ENCODE measurements at regions of chr10 and their contacts with region 1.

Region 1: GRCh38 chr10:24249829-24250415 is 41.0 kb downstream of the KIAA1217 start:
- DNase-seq: no peak
- ATAC-seq: peak in 2 of 8 donors; percentile 19 to 25
- H3K4me3 ChIP-seq: no peak overlapping the region
- H3K27ac ChIP-seq: no peak overlapping the region
- H3K4me1 ChIP-seq: peaks cover 0 to 54% (median 22%) of the 10 kb centered on the region in 9 donors
- H3K27me3 ChIP-seq: no peaks in the 10 kb centered on the region
- CTCF ChIP-seq: no peak

Region 2: GRCh38 chr10:24215196-24215595 is 34.7 kb before region 1 on chr10:
- intact Hi-C with region 1: loop called in 1 of 10 experiments (anchors 5 kb)
- DNase-seq: peak in 1 of 2 donors; percentile 47
- ATAC-seq: peak; percentile 40 to 81 (median 76)
- H3K4me3 ChIP-seq: peak overlapping the region in 2 of 10 donors; percentile 20 to 25
- H3K27ac ChIP-seq: peak overlapping the region; percentile 39 to 84 (median 74)
- H3K4me1 ChIP-seq: peaks cover 12 to 85% (median 56%) of the 10 kb centered on the region in 9 donors
- H3K27me3 ChIP-seq: peaks cover 0 to 4% (median 0%) of the 10 kb centered on the region in 7 donors
- CTCF ChIP-seq: no peak

Region 3: DNA sequence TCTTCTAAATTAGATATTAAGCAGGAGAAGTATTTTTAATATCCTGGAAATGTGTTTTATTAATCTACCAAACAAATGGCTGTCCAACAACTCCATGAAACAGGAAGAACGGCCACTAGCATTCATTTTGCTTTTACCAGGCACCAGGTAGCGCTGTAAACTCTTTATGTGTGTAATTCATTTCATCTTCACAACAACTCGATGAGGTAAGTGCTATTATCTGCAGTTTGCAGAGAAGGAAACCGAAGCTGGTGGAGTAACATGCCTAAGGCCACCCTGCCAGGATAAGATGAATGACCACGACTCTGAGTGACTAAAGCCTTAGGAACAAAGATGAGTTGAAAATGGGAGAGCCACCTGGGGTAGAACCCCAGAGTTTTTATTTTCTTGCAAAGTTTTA is 60.2 kb after region 1 on chr10:
- intact Hi-C with region 1: no loop called
- DNase-seq: no peak
- ATAC-seq: no peak
- H3K4me3 ChIP-seq: no peak overlapping the region
- H3K27ac ChIP-seq: peak overlapping the region in 1 of 10 donors; percentile 62
- H3K4me1 ChIP-seq: peaks cover 11 to 62% (median 34%) of the 10 kb centered on the region in 9 donors
- H3K27me3 ChIP-seq: no peaks in the 10 kb centered on the region
- CTCF ChIP-seq: peak in 2 of 9 donors; percentile 11 to 20

Region 4: DNA sequence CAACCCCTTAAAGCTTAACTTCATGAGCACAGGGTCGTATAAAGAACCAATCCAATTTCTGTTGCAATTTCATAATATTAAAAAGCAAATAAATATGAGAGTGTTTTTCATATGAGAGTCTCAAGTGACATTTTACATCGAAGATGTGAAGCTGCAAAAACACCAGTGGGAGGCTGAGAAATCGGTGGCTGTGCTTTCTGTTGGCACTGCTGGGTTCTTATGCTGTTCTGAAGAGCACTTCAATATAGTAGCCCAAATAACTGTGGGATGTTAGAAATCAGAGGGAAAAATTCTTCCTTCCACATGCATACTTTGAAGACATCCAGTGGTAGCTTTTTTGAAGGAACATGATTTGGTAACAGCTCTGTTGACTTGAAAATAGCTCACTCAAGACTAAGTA is 228.0 kb after region 1 on chr10:
- intact Hi-C with region 1: no loop called
- DNase-seq: no peak
- ATAC-seq: no peak
- H3K4me3 ChIP-seq: no peak overlapping the region
- H3K27ac ChIP-seq: no peak overlapping the region
- H3K4me1 ChIP-seq: peaks cover 0 to 4% (median 0%) of the 10 kb centered on the region in 9 donors
- H3K27me3 ChIP-seq: no peaks in the 10 kb centered on the region
- CTCF ChIP-seq: no peak

Measured in heart right ventricle (tissue), 16 donors.